ENCODE measurements at regions of chr3 and their contacts with region 1.

Region 1: GRCh38 chr3:14439579-14440518 is 37.4 kb downstream of the SLC6A6 start:
- DNase-seq: peak in 1 of 5 donors; percentile 15
- H3K4me3 ChIP-seq: no peak overlapping the region
- H3K4me3 Mint-ChIP-seq: no peak overlapping the region
- H3K27ac ChIP-seq: no peak overlapping the region
- H3K27ac Mint-ChIP-seq: peak overlapping the region; percentile 54 to 74 (median 66)
- H3K4me1 ChIP-seq: peaks cover 38% of the 10 kb centered on the region
- H3K4me1 Mint-ChIP-seq: peaks cover 14 to 43% (median 32%) of the 10 kb centered on the region in 4 donors
- H3K27me3 ChIP-seq: no peaks in the 10 kb centered on the region
- H3K27me3 Mint-ChIP-seq: no peaks in the 10 kb centered on the region

Region 2: DNA sequence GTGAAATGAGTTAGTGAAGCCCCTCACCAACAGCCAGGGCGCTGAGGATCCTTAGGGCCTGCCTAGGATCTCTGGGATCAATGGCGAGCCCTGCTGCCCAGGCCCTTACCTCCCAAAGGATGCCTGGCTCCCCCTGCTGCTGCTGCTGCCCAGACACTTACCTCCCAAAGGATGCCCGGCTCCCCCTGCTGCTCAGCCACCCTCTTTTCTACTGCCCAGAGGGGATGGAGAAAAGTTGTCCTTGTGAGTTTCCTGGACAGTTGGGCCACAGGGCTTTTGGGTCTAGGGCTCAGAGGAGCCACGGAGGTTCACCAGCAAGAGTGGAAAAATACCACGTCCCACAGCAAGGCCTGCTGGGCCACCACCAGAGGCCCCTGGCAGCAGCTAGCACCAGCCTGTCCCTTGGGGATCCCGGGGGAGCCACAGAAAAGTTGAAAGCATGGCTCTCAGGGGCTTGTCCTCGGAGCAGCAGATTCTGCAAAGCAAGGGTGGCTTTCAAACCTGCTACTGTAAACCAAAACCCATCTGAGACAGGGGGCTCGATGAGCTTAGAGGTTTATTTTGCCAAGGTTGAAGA is 22.0 kb after region 1 on chr3:
- CTCF ChIA-PET with region 1: interaction called, 17 read pairs
- POLR2A ChIA-PET with region 1: no interaction called
- intact Hi-C with region 1: no loop called
- DNase-seq: peak in 4 of 5 donors; percentile 30 to 38 (median 32)
- H3K4me3 ChIP-seq: no peak overlapping the region
- H3K4me3 Mint-ChIP-seq: no peak overlapping the region
- H3K27ac ChIP-seq: no peak overlapping the region
- H3K27ac Mint-ChIP-seq: peak overlapping the region in 3 of 7 donors; percentile 23 to 73 (median 41)
- H3K4me1 ChIP-seq: no peaks in the 10 kb centered on the region
- H3K4me1 Mint-ChIP-seq: peaks cover 0 to 5% (median 3%) of the 10 kb centered on the region in 4 donors
- H3K27me3 ChIP-seq: no peaks in the 10 kb centered on the region
- H3K27me3 Mint-ChIP-seq: no peaks in the 10 kb centered on the region